Esophagus muscularis mucosa (tissue), 4 donors: ENCODE measurements at regions of chr12 and their contacts with region 1.

Region 1: GRCh38 chr12:21296751-21297406 is 37.8 kb downstream of the SLCO1A2 start:
- DNase-seq: no peak
- H3K4me3 ChIP-seq: no peak overlapping the region
- H3K27ac ChIP-seq: no peak overlapping the region
- H3K4me1 ChIP-seq: no peaks in the 10 kb centered on the region
- H3K27me3 ChIP-seq: no peaks in the 10 kb centered on the region
- CTCF ChIP-seq: peak; percentile 40 to 72 (median 56)
- EP300 ChIP-seq: no peak
- POLR2A ChIP-seq: no peak

Region 2: DNA sequence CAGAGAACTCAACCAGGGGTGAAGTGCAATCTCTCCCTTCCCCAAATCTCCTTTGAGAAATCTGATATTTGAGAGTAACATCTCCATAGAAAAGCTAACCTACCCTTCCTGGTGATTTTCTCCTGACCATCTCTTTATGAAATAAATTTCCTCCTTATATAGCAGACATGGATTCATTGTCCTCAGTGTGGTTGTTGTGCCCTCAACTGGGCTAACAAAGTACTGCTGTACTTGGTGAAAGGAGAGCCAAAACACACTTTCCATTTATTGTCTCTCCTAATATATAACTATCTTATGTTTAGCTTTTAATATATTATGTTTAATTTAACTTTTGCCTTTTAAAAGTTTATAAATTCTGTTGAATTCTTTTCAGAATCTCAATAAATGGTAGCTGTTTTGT is 231.0 kb before region 1 on chr12:
- intact Hi-C with region 1: no loop called
- DNase-seq: no peak
- H3K4me3 ChIP-seq: no peak overlapping the region
- H3K27ac ChIP-seq: no peak overlapping the region
- H3K4me1 ChIP-seq: no peaks in the 10 kb centered on the region
- H3K27me3 ChIP-seq: no peaks in the 10 kb centered on the region
- CTCF ChIP-seq: peak; percentile 38 to 63 (median 63)
- EP300 ChIP-seq: no peak
- POLR2A ChIP-seq: no peak

Region 3: DNA sequence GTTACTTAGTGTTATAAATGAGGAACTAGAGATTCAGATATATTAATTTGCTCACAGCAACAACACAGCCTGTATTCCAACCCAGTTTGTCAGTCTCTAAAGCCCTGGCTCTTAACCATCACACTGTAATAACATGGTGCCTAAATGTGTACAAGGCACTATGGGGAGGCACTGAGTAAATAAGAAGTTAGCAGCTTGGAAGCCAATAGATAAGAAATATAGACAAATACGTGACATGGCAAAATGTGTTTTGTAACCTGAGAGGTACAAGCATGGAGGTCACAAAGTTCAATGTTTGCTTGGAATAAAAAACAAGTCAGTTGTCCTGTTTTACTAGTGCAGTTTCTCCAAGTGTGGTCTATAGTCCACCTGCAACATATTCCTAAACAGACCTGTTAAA is 54.1 kb after region 1 on chr12:
- intact Hi-C with region 1: no loop called
- DNase-seq: no peak
- H3K4me3 ChIP-seq: no peak overlapping the region
- H3K27ac ChIP-seq: no peak overlapping the region
- H3K4me1 ChIP-seq: peaks cover 0 to 4% (median 0%) of the 10 kb centered on the region in 4 donors
- H3K27me3 ChIP-seq: no peaks in the 10 kb centered on the region
- CTCF ChIP-seq: no peak
- EP300 ChIP-seq: no peak
- POLR2A ChIP-seq: no peak

Region 4: DNA sequence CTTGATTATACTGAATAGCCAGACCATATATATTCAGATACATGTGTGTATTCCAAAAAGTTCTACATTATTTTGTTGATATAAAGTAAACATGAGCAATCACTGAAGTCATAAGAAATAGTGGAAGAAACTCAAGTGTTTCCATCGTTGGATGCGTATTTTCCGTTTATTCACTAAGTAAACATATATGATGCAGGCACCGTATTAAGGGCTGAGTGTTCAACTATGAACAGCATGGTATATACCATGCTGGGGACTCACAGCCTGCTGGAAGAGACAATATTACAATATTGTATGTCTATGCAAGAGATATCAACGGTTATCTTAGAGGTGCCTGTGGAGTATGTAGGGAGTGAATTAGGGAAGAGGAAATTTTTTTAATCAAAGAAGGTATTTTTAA is 141.8 kb after region 1 on chr12:
- intact Hi-C with region 1: loop called (anchors 10 kb)
- DNase-seq: no peak
- H3K4me3 ChIP-seq: peak overlapping the region; percentile 60 to 81 (median 74)
- H3K27ac ChIP-seq: peak overlapping the region; percentile 81 to 92 (median 90)
- H3K4me1 ChIP-seq: peaks cover 4 to 25% (median 21%) of the 10 kb centered on the region in 4 donors
- H3K27me3 ChIP-seq: no peaks in the 10 kb centered on the region
- CTCF ChIP-seq: no peak
- EP300 ChIP-seq: no peak
- POLR2A ChIP-seq: no peak